ENCODE measurements at regions of chr14 and their contacts with region 1.

Region 1: DNA sequence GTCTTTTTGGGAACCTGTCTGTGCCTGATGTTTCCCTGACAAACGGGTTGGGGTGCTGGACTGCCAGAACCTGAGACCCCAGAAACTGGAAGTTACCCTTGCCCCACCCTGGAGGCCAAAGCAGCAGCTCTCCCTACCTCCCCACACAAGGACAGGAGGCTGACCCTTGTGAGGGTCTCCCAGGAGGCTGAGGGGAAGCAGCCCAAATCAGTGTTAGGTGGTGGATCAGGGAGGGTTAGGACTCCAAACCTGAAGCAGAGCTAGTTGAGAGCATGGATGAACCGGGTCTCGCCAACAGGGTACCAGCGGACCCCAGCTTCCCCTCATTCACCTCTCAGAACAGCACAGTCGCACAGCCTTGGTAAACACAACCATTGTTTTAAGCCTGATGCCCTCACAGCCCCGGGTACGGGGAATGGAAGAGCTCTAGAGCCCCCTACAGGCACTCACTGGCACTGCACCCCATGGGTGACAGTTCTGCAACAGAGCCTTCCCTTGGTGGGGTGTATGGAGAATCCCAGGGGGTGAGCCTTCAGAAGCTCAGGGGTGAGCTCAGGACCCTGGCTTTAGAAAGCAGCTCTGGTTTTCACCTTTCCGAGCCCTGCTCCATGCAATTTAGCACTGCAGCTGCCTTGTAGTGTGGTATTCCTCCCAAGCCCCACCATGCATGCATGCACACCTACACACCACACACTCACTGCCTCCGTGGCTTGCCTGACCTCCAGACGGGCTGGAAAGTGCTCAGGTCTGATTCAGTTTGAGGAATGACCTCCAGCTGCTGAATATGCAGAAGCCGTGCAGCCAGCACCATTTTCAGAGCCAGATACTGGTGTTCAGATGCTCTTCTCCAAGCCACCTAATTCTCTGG is 11.2 kb downstream of the ESRRB start:
- DNase-seq: peak; percentile 61 to 86
- ATAC-seq: peak; percentile 92 to 99
- H3K4me3 ChIP-seq: no peak overlapping the region
- H3K27ac ChIP-seq: no peak overlapping the region
- H3K4me1 ChIP-seq: no peaks in the 10 kb centered on the region
- CTCF ChIP-seq: peak; percentile 76
- EP300 ChIP-seq: no peak
- POLR2A ChIP-seq: no peak
- RAD21 ChIP-seq: peak; percentile 87 to 95

Region 2: GRCh38 chr14:76219873-76220272 is 167.3 kb before region 1 on chr14:
- CTCF ChIA-PET with region 1: no interaction called
- POLR2A ChIA-PET with region 1: no interaction called
- DNase-seq: no peak
- ATAC-seq: no peak
- H3K4me3 ChIP-seq: no peak overlapping the region
- H3K27ac ChIP-seq: no peak overlapping the region
- H3K4me1 ChIP-seq: no peaks in the 10 kb centered on the region
- CTCF ChIP-seq: no peak
- EP300 ChIP-seq: no peak
- POLR2A ChIP-seq: no peak
- RAD21 ChIP-seq: no peak

Region 3: GRCh38 chr14:76334316-76334715 is 52.8 kb before region 1 on chr14:
- CTCF ChIA-PET with region 1: no interaction called
- POLR2A ChIA-PET with region 1: no interaction called
- DNase-seq: no peak
- ATAC-seq: no peak
- H3K4me3 ChIP-seq: no peak overlapping the region
- H3K27ac ChIP-seq: no peak overlapping the region
- H3K4me1 ChIP-seq: no peaks in the 10 kb centered on the region
- CTCF ChIP-seq: no peak
- EP300 ChIP-seq: no peak
- POLR2A ChIP-seq: no peak
- RAD21 ChIP-seq: no peak

Region 4: DNA sequence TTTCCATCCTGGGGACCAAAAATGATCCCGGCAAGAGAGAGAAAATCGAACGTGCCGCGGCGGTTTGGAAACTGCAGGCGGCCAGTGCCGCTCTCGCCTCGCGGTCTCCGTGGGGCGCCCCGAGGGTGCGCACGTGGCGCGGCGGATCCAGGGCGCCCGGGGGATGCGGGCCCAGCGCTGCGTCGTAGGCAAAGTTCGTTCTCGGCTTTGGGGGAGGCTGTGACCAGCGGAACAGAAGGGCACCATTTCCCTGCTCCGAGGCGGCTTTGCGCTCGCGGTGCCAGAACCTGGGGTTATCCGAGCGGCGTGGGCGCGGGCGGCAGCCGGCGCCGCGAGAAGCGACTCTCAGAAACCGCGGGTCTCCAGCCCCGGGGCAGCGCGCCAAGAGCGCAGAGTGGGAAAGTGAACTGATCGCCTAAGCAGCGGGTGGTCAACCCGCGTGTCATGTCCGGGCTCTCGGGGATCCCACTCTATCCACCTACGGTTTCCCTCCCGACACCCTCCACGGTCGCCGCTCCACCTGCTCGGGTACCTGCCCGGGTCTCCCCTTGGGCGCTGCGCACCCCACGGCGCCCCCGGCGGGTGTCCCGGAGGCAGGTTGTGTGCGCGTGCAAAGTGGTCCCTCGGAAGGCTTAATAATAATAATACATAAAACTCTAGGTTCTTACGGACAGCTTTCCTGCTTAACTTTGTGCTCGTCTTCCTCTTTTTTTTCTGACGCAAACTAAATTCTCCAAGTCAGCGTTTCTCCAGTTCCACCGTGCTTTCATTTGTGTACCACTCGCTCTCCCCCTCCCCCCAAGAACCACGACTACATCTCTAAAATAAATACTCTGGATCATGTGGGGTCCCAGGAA is 10.0 kb before region 1 on chr14:
- CTCF ChIA-PET with region 1: interaction called, 26 read pairs
- POLR2A ChIA-PET with region 1: no interaction called
- DNase-seq: no peak
- ATAC-seq: no peak
- H3K4me3 ChIP-seq: peak overlapping the region; percentile 39
- H3K27ac ChIP-seq: no peak overlapping the region
- H3K4me1 ChIP-seq: peaks cover 12% of the 10 kb centered on the region; the same call in 2 of the 3 replicates
- CTCF ChIP-seq: no peak
- EP300 ChIP-seq: no peak
- POLR2A ChIP-seq: no peak
- RAD21 ChIP-seq: no peak

Region 5: GRCh38 chr14:76405603-76406002 is 18.5 kb after region 1 on chr14:
- CTCF ChIA-PET with region 1: interaction called, 21 read pairs
- POLR2A ChIA-PET with region 1: no interaction called
- DNase-seq: no peak
- ATAC-seq: no peak
- H3K4me3 ChIP-seq: no peak overlapping the region
- H3K27ac ChIP-seq: no peak overlapping the region
- H3K4me1 ChIP-seq: no peaks in the 10 kb centered on the region
- CTCF ChIP-seq: no peak
- EP300 ChIP-seq: no peak
- POLR2A ChIP-seq: no peak
- RAD21 ChIP-seq: no peak

Region 6: DNA sequence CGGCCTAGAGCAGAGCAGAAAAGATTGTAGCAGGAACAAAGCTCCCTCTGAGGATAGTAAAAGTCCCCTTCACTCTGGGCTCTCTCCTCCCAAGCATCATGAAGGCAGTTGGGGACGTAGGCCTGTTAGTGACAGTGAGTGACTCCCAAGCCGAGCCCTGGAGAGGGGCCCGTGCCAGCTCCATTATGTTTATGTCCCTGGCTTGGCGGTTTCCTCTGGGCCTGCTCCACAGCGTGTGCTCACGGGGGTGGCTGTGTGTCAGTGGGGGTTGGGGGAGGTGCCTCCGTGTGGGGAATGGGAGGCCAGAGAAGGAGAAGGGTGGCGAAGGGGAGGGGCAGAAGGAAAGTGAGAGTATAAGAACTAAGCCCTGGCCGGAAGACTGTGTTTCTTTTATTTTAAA is 204.1 kb after region 1 on chr14:
- CTCF ChIA-PET with region 1: no interaction called
- POLR2A ChIA-PET with region 1: no interaction called
- DNase-seq: no peak
- ATAC-seq: no peak
- H3K4me3 ChIP-seq: no peak overlapping the region
- H3K27ac ChIP-seq: no peak overlapping the region
- H3K4me1 ChIP-seq: no peaks in the 10 kb centered on the region
- CTCF ChIP-seq: no peak
- EP300 ChIP-seq: no peak
- POLR2A ChIP-seq: no peak
- RAD21 ChIP-seq: no peak

Region 7: DNA sequence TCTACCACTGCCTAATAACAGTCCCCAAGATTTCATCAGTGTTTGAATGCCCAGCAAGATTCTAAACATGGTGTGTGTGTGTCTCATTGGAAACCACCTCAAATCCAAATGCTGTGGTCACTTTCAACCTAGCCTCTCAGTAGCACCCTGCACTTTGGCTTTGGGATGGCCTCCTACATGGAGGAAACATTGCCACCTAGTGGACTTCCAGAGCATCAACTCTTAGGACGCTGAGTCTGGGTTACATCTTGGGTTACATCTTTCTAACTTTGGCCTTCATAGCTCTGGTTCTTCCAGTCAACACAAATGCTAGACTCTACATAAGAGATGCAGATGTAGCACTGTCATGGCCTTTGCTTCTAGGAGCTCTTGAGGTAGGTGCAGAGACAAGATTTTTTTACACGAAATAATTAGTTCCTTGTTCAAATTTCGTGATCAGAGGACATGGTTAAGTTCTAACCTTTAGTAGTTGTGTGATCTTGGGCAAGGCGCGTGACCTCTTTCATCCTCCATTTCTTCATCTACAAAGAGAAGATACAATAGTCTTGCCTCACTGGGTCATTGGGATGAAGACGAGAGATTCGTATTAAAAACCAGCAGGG is 260.6 kb after region 1 on chr14:
- CTCF ChIA-PET with region 1: interaction called, 18 read pairs
- POLR2A ChIA-PET with region 1: no interaction called
- DNase-seq: peak; percentile 71
- ATAC-seq: peak; percentile 71 to 89; a peak in 4 of 6 replicates
- H3K4me3 ChIP-seq: no peak overlapping the region
- H3K27ac ChIP-seq: no peak overlapping the region
- H3K4me1 ChIP-seq: no peaks in the 10 kb centered on the region
- CTCF ChIP-seq: peak; percentile 73
- EP300 ChIP-seq: no peak
- POLR2A ChIP-seq: no peak
- RAD21 ChIP-seq: peak; percentile 59 to 73

Region 8: GRCh38 chr14:76664790-76665189 is 277.6 kb after region 1 on chr14:
- CTCF ChIA-PET with region 1: no interaction called
- POLR2A ChIA-PET with region 1: no interaction called
- DNase-seq: no peak
- ATAC-seq: no peak
- H3K4me3 ChIP-seq: no peak overlapping the region
- H3K27ac ChIP-seq: no peak overlapping the region
- H3K4me1 ChIP-seq: no peaks in the 10 kb centered on the region
- CTCF ChIP-seq: no peak
- EP300 ChIP-seq: no peak
- POLR2A ChIP-seq: no peak
- RAD21 ChIP-seq: no peak